CD4-positive, alpha-beta T cell (primary cell): ENCODE measurements at regions of chr12 and their contacts with region 1.

Region 1: DNA sequence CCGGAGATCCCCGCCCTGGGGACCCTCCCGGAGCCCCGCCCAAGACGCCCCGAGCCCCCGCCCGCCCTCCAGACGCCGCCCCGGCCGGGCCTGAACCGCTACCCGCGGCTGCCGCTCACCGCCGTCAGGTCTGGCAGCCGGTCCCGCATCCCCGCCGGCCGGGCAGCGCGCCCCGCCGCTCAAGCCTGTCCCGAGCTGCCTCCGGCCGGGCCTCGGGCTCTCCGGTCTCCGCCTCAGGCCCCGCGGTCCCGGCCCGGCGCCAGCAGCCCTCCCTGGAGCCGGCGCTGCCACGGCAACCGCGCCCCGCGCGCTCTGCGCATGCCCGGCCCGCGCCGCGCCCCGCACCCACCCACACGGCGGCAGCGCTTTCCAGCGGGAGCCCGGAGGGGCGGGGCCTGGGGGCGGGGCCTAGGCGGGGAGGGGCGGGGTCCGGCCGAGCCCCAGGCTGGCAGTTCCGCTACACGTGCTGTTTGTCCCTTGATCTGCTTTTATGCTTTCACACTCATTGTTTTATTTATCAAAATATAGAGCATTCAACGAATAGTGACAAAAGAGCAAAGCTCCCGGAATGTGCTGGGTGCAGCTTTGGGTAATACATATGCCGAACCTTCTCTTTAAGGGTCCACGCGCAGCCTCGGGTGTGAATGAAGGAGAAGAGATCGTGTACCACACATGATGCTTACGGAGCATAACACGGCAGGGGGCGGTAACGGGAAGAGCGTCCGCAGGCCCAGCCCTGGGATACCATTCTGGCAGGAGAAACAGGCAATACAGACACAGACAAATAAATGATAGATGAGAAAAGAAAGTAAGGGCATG is at the start of gene STX2:
- DNase-seq: peak; percentile 77 to 96 (median 92)
- ATAC-seq: peak; percentile 91
- H3K4me3 ChIP-seq: peak within 1 kb of the TSS; percentile 68
- H3K4me3 Mint-ChIP-seq: peak within 1 kb of the TSS; percentile 89
- H3K27ac ChIP-seq: peak within 1 kb of the TSS in 1 of 2 donors; percentile 42
- H3K27ac Mint-ChIP-seq: peak within 1 kb of the TSS; percentile 63
- H3K4me1 ChIP-seq: peaks cover 18% of the 10 kb centered on the region
- H3K4me1 Mint-ChIP-seq: peaks cover 27% of the 10 kb centered on the region
- H3K27me3 ChIP-seq: no peaks in the 10 kb centered on the region
- H3K27me3 Mint-ChIP-seq: no peaks in the 10 kb centered on the region
- CTCF ChIP-seq: peak; percentile 54
- total RNA-seq, gene STX2: 13.4 to 14.1 TPM

Region 2: GRCh38 chr12:130818635-130819576 is 20.3 kb before region 1 on chr12:
- CTCF ChIA-PET with region 1: no interaction called
- POLR2A ChIA-PET with region 1: no interaction called
- intact Hi-C with region 1: loop called in 1 of 2 experiments (anchors 2 kb)
- DNase-seq: peak; percentile 63 to 89 (median 70)
- ATAC-seq: peak; percentile 88
- H3K4me3 ChIP-seq: peak overlapping the region; percentile 75
- H3K4me3 Mint-ChIP-seq: peak overlapping the region; percentile 90
- H3K27ac ChIP-seq: peak overlapping the region in 1 of 2 donors; percentile 48
- H3K27ac Mint-ChIP-seq: peak overlapping the region; percentile 85
- H3K4me1 ChIP-seq: peaks cover 11% of the 10 kb centered on the region
- H3K4me1 Mint-ChIP-seq: peaks cover 23% of the 10 kb centered on the region
- H3K27me3 ChIP-seq: no peaks in the 10 kb centered on the region
- H3K27me3 Mint-ChIP-seq: no peaks in the 10 kb centered on the region
- CTCF ChIP-seq: peak; percentile 92

Region 3: DNA sequence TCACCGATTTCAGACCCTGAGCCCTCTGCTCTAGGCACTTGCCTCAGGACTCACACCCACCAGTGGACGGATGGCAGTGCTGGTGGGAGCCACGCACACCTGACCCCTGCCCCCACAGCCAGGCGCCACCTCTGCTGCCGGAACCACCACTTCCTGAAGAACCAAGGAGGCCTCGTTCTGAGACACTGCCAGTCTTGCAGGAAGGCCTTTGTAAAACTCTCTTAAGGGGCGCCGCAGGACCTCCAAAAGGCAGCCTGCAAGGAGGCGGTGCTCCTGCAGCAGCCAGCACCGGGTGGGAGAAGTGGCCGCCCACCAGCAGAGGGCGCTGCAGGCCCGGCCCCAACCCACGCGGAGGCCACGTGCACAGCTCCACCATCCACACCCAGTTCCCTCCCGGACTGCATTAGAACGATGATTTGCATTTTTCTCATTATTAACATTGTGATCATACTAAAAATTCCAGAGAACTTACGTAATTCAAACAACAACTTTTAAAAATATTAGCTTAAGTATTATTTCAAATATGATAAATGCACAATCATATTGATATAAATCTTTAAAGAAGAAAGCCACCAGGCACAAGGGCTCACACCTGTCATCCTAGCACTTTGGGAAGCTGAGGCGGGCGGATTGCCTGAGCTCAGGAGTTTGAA is 12.9 kb before region 1 on chr12:
- CTCF ChIA-PET with region 1: interaction called, 18 read pairs
- POLR2A ChIA-PET with region 1: interaction called, 3 read pairs
- intact Hi-C with region 1: no loop called
- DNase-seq: peak; percentile 57 to 85 (median 68)
- ATAC-seq: peak; percentile 100
- H3K4me3 ChIP-seq: no peak overlapping the region
- H3K4me3 Mint-ChIP-seq: no peak overlapping the region
- H3K27ac ChIP-seq: no peak overlapping the region
- H3K27ac Mint-ChIP-seq: no peak overlapping the region
- H3K4me1 ChIP-seq: peaks cover 7% of the 10 kb centered on the region
- H3K4me1 Mint-ChIP-seq: peaks cover 11% of the 10 kb centered on the region
- H3K27me3 ChIP-seq: no peaks in the 10 kb centered on the region
- H3K27me3 Mint-ChIP-seq: no peaks in the 10 kb centered on the region
- CTCF ChIP-seq: peak; percentile 90

Region 4: DNA sequence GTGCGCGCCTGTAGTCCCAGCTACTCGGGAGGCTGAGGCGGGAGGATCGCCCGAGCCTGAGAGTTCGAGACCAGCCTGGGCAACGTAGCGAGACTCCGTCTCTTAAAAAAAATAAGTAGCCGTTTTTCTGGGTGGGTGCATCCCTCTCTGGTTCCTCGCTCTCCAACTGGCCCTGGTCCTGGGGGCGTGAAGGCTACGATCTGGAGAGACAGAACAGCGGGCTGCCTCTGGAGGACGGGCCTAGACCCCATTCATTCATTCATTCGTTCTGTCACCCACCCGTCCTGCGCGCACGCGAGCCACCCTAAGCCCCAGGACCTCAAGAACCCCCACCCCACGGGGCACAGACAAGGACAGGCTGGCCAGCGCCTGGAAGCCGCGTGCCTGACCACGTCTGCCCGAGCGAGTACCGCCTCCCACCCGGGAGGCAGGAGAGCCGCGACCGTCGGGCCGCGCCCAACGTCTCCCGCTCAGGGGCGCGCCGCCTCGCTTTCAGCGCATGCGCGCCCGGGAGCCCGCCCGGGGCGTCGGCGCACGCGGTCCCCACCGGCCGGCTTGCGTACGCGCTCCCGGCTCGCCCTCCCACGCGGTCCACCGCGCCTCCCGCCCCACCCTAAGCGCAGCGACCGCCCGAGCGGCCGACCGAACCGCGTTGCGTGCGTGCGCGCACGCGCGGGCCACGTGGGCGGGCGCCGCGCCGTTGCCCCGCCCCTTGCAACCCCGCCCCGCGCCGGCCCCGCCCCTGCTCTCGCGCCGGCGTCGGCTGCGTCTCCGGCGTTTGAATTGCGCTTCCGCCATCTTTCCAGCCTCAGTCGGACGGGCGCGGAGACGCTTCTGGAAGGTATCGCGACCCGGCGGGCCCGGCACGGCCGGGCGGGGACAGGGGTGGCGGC is 32.4 kb after region 1 on chr12 and contains the start of gene RAN:
- CTCF ChIA-PET with region 1: interaction called, 4 read pairs
- POLR2A ChIA-PET with region 1: interaction called, 8 read pairs
- intact Hi-C with region 1: loop called (anchors 1 kb)
- DNase-seq: peak; percentile 79 to 98 (median 90)
- ATAC-seq: peak; percentile 68
- H3K4me3 ChIP-seq: peak within 1 kb of the TSS; percentile 84
- H3K4me3 Mint-ChIP-seq: peak within 1 kb of the TSS; percentile 93
- H3K27ac ChIP-seq: peak within 1 kb of the TSS; percentile 79 to 89
- H3K27ac Mint-ChIP-seq: peak within 1 kb of the TSS; percentile 95
- H3K4me1 ChIP-seq: peaks cover 56% of the 10 kb centered on the region
- H3K4me1 Mint-ChIP-seq: peaks cover 65% of the 10 kb centered on the region
- H3K27me3 ChIP-seq: no peaks in the 10 kb centered on the region
- H3K27me3 Mint-ChIP-seq: no peaks in the 10 kb centered on the region
- CTCF ChIP-seq: no peak
- total RNA-seq, gene RAN: 278 to 302 TPM

Region 5: GRCh38 chr12:130904064-130904463 is 64.9 kb after region 1 on chr12:
- CTCF ChIA-PET with region 1: no interaction called
- POLR2A ChIA-PET with region 1: no interaction called
- intact Hi-C with region 1: no loop called
- DNase-seq: no peak
- ATAC-seq: no peak
- H3K4me3 ChIP-seq: no peak overlapping the region
- H3K4me3 Mint-ChIP-seq: no peak overlapping the region
- H3K27ac ChIP-seq: no peak overlapping the region
- H3K27ac Mint-ChIP-seq: no peak overlapping the region
- H3K4me1 ChIP-seq: no peaks in the 10 kb centered on the region
- H3K4me1 Mint-ChIP-seq: no peaks in the 10 kb centered on the region
- H3K27me3 ChIP-seq: no peaks in the 10 kb centered on the region
- H3K27me3 Mint-ChIP-seq: peaks cover 10% of the 10 kb centered on the region
- CTCF ChIP-seq: no peak